ENCODE measurements at regions of chr9 and their contacts with region 1.

Region 1: DNA sequence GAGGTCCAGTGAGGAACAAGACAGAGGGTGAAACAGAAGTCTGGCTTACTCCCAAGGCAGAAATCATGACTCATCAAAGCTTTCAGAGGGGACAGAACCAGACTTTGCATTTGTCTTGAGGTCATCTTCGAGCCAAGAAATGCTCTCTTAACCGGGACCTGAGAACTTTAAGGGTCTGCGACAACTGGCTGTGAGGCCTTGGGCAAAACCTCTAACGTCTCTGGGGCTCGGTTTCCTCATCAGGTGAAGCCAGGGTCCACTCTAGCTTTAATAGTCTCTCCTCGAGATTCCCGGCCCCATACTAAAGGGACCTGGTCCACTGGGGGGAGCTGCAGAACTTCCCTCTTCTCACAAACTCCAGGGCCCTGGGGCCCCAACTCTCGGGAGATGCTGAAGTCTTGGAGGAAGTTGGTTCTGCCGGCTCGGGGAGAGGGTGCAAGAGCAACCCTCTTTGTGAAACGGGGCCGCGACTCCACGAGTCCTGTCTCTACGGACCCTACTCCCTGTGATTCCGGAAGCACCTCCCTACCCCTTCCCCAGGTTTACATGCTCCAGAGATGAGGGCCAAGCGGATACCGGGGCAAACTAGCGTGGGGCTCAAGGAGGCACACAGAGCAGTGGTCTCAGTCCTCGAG is 2.6 kb downstream of the GLIS3 start:
- DNase-seq: peak; percentile 61 to 91
- H3K4me3 ChIP-seq: peak overlapping the region; percentile 68 to 77
- H3K27ac ChIP-seq: peak overlapping the region; percentile 97 to 99
- H3K4me1 ChIP-seq: peaks cover 12 to 26% of the 10 kb centered on the region in 2 donors
- H3K27me3 ChIP-seq: no peaks in the 10 kb centered on the region
- CTCF ChIP-seq: peak in 2 of 3 experiments; percentile 40 to 61

Region 2: DNA sequence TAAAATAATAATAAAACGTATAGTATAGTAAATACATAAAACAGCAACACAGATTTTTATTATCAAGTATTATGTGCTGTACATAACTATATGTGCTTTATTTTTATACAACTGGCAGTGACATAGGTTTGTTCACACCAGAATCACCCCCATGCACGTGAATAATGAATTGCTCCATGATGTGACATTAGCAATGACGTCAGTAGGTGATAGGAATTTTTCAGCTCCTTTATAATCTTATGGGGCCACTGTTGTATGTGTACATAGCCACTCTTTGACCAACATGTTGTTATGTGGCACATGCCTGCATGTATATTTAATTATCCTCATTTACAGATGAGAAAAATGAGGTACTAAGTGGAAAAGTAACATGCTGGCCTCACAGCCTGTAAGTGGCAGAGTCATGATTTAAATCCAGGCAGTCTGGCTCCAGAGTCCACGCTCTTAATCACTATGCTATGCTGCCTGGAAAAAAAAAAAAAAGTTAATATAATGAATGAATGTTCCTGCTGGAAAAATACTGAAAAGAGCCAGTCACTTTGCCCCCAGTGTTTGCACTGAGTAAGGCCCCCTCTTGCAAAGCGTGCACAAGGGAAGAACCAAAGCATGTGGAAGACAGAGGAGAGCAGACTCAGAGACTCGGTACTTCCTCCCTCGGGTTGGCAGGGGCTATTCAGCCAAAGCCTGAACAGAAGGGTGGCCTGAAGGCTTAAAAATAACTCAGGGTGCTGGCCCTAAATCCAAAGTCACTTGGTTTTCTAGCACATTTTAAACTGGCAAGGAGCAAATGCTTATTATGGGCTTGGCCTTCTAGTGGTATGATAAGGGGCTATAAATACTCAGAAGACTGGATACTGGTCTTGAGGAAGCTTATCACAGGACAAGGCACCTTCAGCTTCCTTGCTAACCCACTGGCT is 204.2 kb before region 1 on chr9:
- intact Hi-C with region 1: loop called (anchors 5 kb)
- DNase-seq: peak in 1 of 2 donors; percentile 70
- H3K4me3 ChIP-seq: no peak overlapping the region
- H3K27ac ChIP-seq: peak overlapping the region; percentile 65 to 75
- H3K4me1 ChIP-seq: peaks cover 11 to 30% of the 10 kb centered on the region in 2 donors
- H3K27me3 ChIP-seq: no peaks in the 10 kb centered on the region
- CTCF ChIP-seq: peak in 1 of 3 experiments; percentile 15

Region 3: DNA sequence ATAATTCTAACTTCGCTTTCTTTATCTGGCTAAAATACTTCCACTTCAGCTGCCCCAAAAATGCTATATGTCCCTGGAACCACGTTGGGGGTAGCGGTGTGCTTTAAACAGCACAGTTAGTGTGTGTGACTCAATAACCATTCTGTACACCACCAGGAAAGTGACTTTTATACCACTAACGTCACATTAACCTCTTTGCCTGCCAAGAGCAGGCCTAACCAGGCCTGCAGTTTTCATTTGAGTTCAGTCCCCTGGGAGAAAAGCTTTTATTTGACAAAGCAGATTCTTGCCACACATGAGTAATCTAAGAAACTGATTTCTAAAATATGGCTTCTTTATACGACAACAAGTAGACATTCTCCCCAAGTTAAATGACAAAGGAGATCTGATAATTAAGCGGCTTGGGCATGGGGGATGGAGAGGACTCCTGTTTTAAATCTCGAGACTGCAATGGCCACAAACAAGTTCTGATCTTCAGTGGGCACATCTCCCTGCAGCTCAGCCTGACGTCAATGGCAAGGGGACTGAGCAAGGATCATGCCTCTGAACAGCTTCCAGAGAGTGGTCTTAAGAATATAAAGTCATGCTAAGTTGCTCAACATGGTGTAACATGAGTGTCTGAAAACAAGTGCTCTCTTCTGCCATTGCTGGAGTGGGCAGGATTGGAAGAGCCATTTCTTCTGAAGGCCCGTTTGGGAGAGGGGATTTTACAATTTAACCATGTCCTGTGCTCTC is 89.2 kb before region 1 on chr9:
- intact Hi-C with region 1: loop called (anchors 5 kb)
- DNase-seq: peak in 1 of 2 donors; percentile 78
- H3K4me3 ChIP-seq: no peak overlapping the region
- H3K27ac ChIP-seq: peak overlapping the region; percentile 56 to 65
- H3K4me1 ChIP-seq: peaks cover 12 to 16% of the 10 kb centered on the region in 2 donors
- H3K27me3 ChIP-seq: no peaks in the 10 kb centered on the region
- CTCF ChIP-seq: no peak

Region 4: DNA sequence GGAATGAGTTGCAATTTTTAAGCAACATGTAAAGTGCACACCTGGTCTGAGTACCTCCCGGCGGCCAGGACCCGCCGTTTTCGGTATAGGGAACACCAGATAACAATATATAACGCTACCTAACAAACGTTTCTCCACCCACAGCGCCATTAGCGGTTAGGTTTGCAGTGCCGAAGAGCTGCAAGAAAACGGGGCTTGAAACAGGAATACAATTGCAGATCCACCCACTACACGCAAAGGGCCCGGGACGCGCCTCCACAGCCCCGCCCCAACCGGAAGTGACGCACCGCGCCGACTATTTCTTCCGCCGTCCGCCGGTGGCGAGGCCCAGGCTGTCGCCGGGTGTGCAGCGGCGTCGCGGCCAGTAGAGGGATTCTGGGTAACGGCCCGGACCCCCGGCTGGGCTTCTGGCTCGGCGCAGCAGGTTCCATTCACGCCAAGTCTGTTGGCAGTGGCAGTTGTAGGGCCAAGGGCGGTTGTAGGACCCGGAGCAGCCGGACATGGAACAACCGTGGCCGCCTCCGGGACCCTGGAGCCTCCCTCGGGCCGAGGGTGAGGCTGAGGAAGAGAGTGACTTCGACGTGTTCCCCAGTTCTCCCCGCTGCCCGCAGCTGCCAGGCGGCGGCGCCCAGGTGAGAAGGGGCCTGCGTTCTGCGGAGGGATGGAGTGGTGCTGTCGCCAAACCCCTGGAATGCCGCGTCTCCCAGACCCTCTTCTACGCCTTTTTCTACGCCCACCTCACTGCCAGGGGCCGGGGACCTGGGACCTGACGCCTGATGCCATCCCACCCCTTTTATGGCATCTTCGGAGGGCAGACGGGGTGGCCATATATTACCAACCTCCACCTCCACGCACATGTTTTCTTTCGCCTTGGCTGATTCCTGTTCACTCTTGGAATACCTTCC is 382.3 kb after region 1 on chr9 and contains the start of gene CDC37L1:
- intact Hi-C with region 1: loop called (anchors 5 kb)
- DNase-seq: peak; percentile 87 to 99
- H3K4me3 ChIP-seq: peak within 1 kb of the TSS; percentile 79 to 91
- H3K27ac ChIP-seq: peak within 1 kb of the TSS; percentile 97 to 98
- H3K4me1 ChIP-seq: peaks cover 0 to 16% of the 10 kb centered on the region in 2 donors
- H3K27me3 ChIP-seq: no peaks in the 10 kb centered on the region
- CTCF ChIP-seq: peak; percentile 61 to 76 (median 76)
- total RNA-seq, gene CDC37L1: 17.2 TPM